Dorsolateral prefrontal cortex (tissue), 120 donors: ENCODE measurements at regions of chr3 and their contacts with region 1.

Region 1: GRCh38 chr3:3589715-3590130 is 209.5 kb upstream of the LRRN1 start:
- DNase-seq: no peak
- H3K4me3 ChIP-seq: no peak overlapping the region
- H3K27ac ChIP-seq: no peak overlapping the region
- H3K27me3 ChIP-seq: no peaks in the 10 kb centered on the region
- CTCF ChIP-seq: no peak

Region 2: DNA sequence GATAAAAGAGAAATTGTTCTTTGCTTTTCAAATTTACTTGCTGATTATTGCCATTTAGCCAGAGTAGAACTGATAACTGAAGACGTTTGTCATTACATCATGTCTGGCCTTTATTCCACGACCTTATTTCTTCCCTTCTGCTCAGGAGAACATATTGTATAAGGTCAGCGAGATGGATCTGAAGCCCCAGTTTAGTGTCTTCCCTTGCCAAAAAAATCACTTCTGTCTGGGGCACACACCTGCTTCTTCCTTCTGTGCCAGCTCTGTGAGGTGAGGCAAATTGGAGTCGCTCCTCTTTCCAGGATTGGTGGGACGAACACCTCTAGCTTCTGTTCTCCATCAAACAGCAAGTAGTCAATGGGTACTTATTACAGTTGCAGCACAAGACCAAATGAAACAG is 159.9 kb before region 1 on chr3:
- intact Hi-C with region 1: no loop called
- DNase-seq: peak in 1 of 10 donors; percentile 4
- H3K4me3 ChIP-seq: no peak overlapping the region
- H3K27ac ChIP-seq: no peak overlapping the region
- H3K27me3 ChIP-seq: no peaks in the 10 kb centered on the region
- CTCF ChIP-seq: no peak

Region 3: GRCh38 chr3:3538451-3538850 is 51.3 kb before region 1 on chr3:
- intact Hi-C with region 1: loop called in 1 of 2 experiments (anchors 1 kb)
- DNase-seq: no peak
- H3K4me3 ChIP-seq: no peak overlapping the region
- H3K27ac ChIP-seq: no peak overlapping the region
- H3K27me3 ChIP-seq: no peaks in the 10 kb centered on the region
- CTCF ChIP-seq: no peak